T-cell (primary cell): ENCODE measurements at regions of chr9 and their contacts with region 1.

Region 1: DNA sequence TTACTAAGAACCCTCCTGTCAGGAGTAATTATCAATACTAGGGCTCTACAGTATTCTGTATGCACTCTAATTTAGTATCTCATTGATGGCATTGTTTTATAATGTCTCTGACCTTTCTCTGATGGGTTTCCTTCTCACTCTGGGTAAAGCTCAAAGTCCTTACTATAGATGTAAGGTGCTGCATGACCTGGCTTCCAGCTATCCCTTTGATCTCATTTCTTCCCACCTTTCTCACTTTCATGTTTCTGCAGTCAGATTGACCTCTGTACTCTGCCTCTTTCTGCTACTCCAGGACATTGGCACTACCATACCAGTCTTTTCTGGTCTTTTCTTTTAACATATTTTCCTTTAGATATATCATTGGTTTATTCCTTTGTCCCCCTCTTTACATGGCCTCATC is 2332.8 kb upstream of the C9orf72 start:
- DNase-seq: no peak
- ATAC-seq: no peak
- H3K4me3 ChIP-seq: no peak overlapping the region
- H3K4me3 Mint-ChIP-seq: no peak overlapping the region
- H3K27ac ChIP-seq: no peak overlapping the region
- H3K27ac Mint-ChIP-seq: no peak overlapping the region
- H3K4me1 ChIP-seq: no peaks in the 10 kb centered on the region
- H3K4me1 Mint-ChIP-seq: no peaks in the 10 kb centered on the region
- H3K27me3 ChIP-seq: no peaks in the 10 kb centered on the region
- H3K27me3 Mint-ChIP-seq: no peaks in the 10 kb centered on the region

Region 2: GRCh38 chr9:29838491-29839022 is 67.5 kb before region 1 on chr9:
- CTCF ChIA-PET with region 1: no interaction called
- POLR2A ChIA-PET with region 1: no interaction called
- DNase-seq: no peak
- ATAC-seq: no peak
- H3K4me3 ChIP-seq: no peak overlapping the region
- H3K4me3 Mint-ChIP-seq: no peak overlapping the region
- H3K27ac ChIP-seq: no peak overlapping the region
- H3K27ac Mint-ChIP-seq: no peak overlapping the region
- H3K4me1 ChIP-seq: no peaks in the 10 kb centered on the region
- H3K4me1 Mint-ChIP-seq: no peaks in the 10 kb centered on the region
- H3K27me3 ChIP-seq: no peaks in the 10 kb centered on the region
- H3K27me3 Mint-ChIP-seq: no peaks in the 10 kb centered on the region

Region 3: GRCh38 chr9:31671011-31671410 is 1764.9 kb after region 1 on chr9:
- CTCF ChIA-PET with region 1: no interaction called
- POLR2A ChIA-PET with region 1: interaction called in 1 of 2 experiments, 13 read pairs
- DNase-seq: no peak
- ATAC-seq: no peak
- H3K4me3 ChIP-seq: no peak overlapping the region
- H3K4me3 Mint-ChIP-seq: no peak overlapping the region
- H3K27ac ChIP-seq: no peak overlapping the region
- H3K27ac Mint-ChIP-seq: no peak overlapping the region
- H3K4me1 ChIP-seq: no peaks in the 10 kb centered on the region
- H3K4me1 Mint-ChIP-seq: no peaks in the 10 kb centered on the region
- H3K27me3 ChIP-seq: no peaks in the 10 kb centered on the region
- H3K27me3 Mint-ChIP-seq: no peaks in the 10 kb centered on the region